CD4-positive, alpha-beta memory T cell (primary cell): ENCODE measurements at regions of chr20 and their contacts with region 1.

Region 1: DNA sequence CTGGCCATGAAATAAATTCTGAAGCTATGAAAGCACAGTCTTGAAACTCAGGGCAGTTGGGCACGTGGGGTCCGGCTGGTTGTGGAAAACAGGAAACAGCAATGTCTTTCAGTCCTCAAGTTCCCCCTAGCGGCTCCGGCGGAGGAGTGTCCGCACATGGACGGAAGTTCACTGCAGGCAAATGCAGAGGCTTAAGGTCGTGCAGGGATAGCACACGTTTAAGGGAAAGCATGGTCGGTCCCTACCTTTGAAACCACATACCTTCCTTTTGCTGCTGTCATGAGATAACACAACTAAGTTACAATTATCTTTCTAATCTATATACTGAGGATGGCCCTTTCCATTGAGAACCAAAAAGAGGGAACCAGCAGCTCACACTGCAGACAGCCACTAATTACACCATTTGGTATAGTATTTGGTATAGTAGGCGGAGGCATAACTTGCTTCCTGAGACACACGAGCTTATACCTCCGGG is 52.6 kb upstream of the NFATC2 start:
- DNase-seq: peak; percentile 62 to 72 (median 69)
- H3K4me3 ChIP-seq: no peak overlapping the region
- H3K4me3 Mint-ChIP-seq: peak overlapping the region in 7 of 8 donors; percentile 4 to 63 (median 36)
- H3K27ac ChIP-seq: no peak overlapping the region
- H3K27ac Mint-ChIP-seq: peak overlapping the region in 3 of 7 donors; percentile 27 to 68 (median 38)
- H3K4me1 ChIP-seq: peaks cover 10% of the 10 kb centered on the region
- H3K4me1 Mint-ChIP-seq: peaks cover 6 to 12% (median 8%) of the 10 kb centered on the region in 4 donors
- H3K27me3 ChIP-seq: no peaks in the 10 kb centered on the region
- H3K27me3 Mint-ChIP-seq: peaks cover 3 to 6% of the 10 kb centered on the region in 2 donors

Region 2: GRCh38 chr20:51220293-51220706 is 374.8 kb before region 1 on chr20:
- CTCF ChIA-PET with region 1: no interaction called
- POLR2A ChIA-PET with region 1: no interaction called
- intact Hi-C with region 1: loop called (anchors 10 kb)
- DNase-seq: peak in 4 of 5 donors; percentile 11 to 35 (median 29)
- H3K4me3 ChIP-seq: no peak overlapping the region
- H3K4me3 Mint-ChIP-seq: peak overlapping the region in 3 of 8 donors; percentile 21 to 39 (median 35)
- H3K27ac ChIP-seq: no peak overlapping the region
- H3K27ac Mint-ChIP-seq: no peak overlapping the region
- H3K4me1 ChIP-seq: no peaks in the 10 kb centered on the region
- H3K4me1 Mint-ChIP-seq: peaks cover 3 to 12% (median 6%) of the 10 kb centered on the region in 4 donors
- H3K27me3 ChIP-seq: peaks cover 3% of the 10 kb centered on the region
- H3K27me3 Mint-ChIP-seq: peaks cover 31 to 47% of the 10 kb centered on the region in 2 donors

Region 3: GRCh38 chr20:51372176-51372803 is 222.8 kb before region 1 on chr20:
- CTCF ChIA-PET with region 1: interaction called, 66 read pairs
- POLR2A ChIA-PET with region 1: interaction called, 3 read pairs
- intact Hi-C with region 1: loop called (anchors 1 kb)
- DNase-seq: peak in 4 of 5 donors; percentile 41 to 54 (median 46)
- H3K4me3 ChIP-seq: no peak overlapping the region
- H3K4me3 Mint-ChIP-seq: no peak overlapping the region
- H3K27ac ChIP-seq: no peak overlapping the region
- H3K27ac Mint-ChIP-seq: peak overlapping the region in 2 of 7 donors; percentile 63 to 81
- H3K4me1 ChIP-seq: no peaks in the 10 kb centered on the region
- H3K4me1 Mint-ChIP-seq: peaks cover 0 to 6% (median 4%) of the 10 kb centered on the region in 4 donors
- H3K27me3 ChIP-seq: no peaks in the 10 kb centered on the region
- H3K27me3 Mint-ChIP-seq: no peaks in the 10 kb centered on the region

Region 4: DNA sequence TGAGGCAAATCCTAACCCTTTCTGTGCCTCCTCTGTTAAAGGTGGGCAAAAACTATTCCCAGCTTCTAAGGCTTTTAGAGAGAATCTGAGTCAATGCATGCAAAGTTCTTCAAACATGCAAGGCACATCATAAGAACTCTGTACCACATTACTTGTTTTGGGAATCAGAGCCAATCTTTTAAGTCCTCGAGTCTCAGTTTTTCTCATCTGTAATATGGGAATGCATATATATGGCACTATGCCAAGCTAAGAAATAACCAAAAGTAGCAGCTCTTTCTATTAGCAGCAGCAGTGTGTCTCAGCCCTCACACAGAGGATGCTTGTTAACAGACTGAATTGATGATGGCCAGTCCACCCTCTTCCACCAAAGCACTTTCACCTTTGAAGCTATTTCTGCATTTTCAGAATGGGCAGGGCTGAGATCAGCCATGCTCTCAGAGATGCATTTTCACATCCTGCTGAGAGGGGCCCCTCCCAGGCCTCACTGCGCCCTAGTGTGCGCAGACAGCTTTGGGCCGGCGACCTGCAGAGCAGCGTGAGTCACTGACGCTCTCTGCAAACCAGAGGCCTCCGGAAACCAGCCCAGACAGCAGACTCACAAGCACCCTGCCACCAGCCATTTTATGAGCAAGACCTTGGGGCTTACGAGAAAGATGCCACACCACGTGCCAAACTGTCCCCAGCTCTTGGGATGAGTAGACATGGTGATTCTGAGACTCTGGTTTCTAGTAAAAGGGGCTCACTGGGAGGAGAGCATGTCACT is 190.6 kb before region 1 on chr20:
- CTCF ChIA-PET with region 1: interaction called, 11 read pairs
- POLR2A ChIA-PET with region 1: interaction called, 4 read pairs
- intact Hi-C with region 1: no loop called
- DNase-seq: peak; percentile 86 to 98 (median 90)
- H3K4me3 ChIP-seq: no peak overlapping the region
- H3K4me3 Mint-ChIP-seq: peak overlapping the region in 7 of 8 donors; percentile 43 to 94 (median 78)
- H3K27ac ChIP-seq: peak overlapping the region; percentile 96
- H3K27ac Mint-ChIP-seq: peak overlapping the region; percentile 99 to 100 (median 100)
- H3K4me1 ChIP-seq: peaks cover 97% of the 10 kb centered on the region
- H3K4me1 Mint-ChIP-seq: peaks cover 64 to 92% (median 77%) of the 10 kb centered on the region in 4 donors
- H3K27me3 ChIP-seq: no peaks in the 10 kb centered on the region
- H3K27me3 Mint-ChIP-seq: no peaks in the 10 kb centered on the region

Region 5: GRCh38 chr20:51500311-51500710 is 94.8 kb before region 1 on chr20:
- CTCF ChIA-PET with region 1: interaction called, 8 read pairs
- POLR2A ChIA-PET with region 1: no interaction called
- intact Hi-C with region 1: loop called (anchors 5 kb)
- DNase-seq: peak; percentile 55 to 85 (median 64)
- H3K4me3 ChIP-seq: no peak overlapping the region
- H3K4me3 Mint-ChIP-seq: peak overlapping the region in 5 of 8 donors; percentile 14 to 88 (median 62)
- H3K27ac ChIP-seq: peak overlapping the region; percentile 16
- H3K27ac Mint-ChIP-seq: peak overlapping the region; percentile 90 to 99 (median 97)
- H3K4me1 ChIP-seq: peaks cover 80% of the 10 kb centered on the region
- H3K4me1 Mint-ChIP-seq: peaks cover 70 to 88% (median 79%) of the 10 kb centered on the region in 4 donors
- H3K27me3 ChIP-seq: no peaks in the 10 kb centered on the region
- H3K27me3 Mint-ChIP-seq: no peaks in the 10 kb centered on the region

Region 6: DNA sequence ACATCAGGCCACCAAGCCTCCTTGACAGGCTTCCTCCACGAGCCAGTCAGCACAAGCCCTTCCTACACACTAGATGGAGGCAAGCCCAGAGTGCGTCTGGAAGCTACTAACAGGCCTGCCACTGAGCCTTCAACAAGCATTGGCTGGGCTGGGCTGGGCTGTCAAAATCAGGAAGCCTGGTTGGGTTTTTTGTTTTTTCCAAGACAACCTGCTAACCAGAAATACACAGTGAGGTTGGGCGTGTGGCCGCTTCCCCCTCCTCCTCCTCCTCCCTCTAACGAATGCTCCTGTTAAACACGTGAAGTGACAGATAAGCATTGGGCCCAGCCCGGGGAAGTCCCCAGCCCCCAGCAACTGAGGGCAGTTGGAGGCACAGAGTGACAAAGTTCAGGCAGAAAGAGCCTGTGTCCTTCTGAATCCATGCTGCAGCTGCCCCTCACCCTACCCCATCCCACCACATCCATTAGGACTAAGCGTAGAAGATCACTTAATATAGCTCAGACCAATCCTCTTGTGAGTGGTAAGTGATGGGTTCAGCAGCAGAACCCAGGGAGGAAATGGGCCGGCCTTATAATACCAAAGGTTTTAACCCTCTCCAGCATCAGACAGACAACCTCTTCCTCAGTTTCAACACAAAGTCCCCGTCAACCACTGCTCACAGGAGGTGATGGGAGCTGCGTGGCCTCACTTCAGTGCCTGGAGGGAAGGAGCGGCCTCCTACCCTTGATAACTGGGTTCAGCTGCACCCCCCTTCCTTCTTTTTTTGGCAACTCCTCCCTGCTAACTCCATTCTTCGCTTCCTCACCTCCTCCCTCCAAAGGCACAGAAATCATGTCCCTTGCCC is 53.7 kb before region 1 on chr20:
- CTCF ChIA-PET with region 1: interaction called, 21 read pairs
- POLR2A ChIA-PET with region 1: interaction called, 13 read pairs
- intact Hi-C with region 1: loop called (anchors 2 kb)
- DNase-seq: peak; percentile 88 to 98 (median 91)
- H3K4me3 ChIP-seq: peak overlapping the region; percentile 72 to 85
- H3K4me3 Mint-ChIP-seq: peak overlapping the region; percentile 95 to 99 (median 98)
- H3K27ac ChIP-seq: peak overlapping the region; percentile 98
- H3K27ac Mint-ChIP-seq: peak overlapping the region; percentile 97 to 100 (median 98)
- H3K4me1 ChIP-seq: peaks cover 55% of the 10 kb centered on the region
- H3K4me1 Mint-ChIP-seq: peaks cover 43 to 65% (median 52%) of the 10 kb centered on the region in 4 donors
- H3K27me3 ChIP-seq: no peaks in the 10 kb centered on the region
- H3K27me3 Mint-ChIP-seq: no peaks in the 10 kb centered on the region

Region 7: GRCh38 chr20:51624157-51624731 is 29.1 kb after region 1 on chr20:
- CTCF ChIA-PET with region 1: interaction called, 9 read pairs
- POLR2A ChIA-PET with region 1: no interaction called
- intact Hi-C with region 1: loop called (anchors 2 kb)
- DNase-seq: peak; percentile 47 to 56 (median 54)
- H3K4me3 ChIP-seq: no peak overlapping the region
- H3K4me3 Mint-ChIP-seq: no peak overlapping the region
- H3K27ac ChIP-seq: no peak overlapping the region
- H3K27ac Mint-ChIP-seq: no peak overlapping the region
- H3K4me1 ChIP-seq: no peaks in the 10 kb centered on the region
- H3K4me1 Mint-ChIP-seq: peaks cover 2 to 11% (median 5%) of the 10 kb centered on the region in 4 donors
- H3K27me3 ChIP-seq: no peaks in the 10 kb centered on the region
- H3K27me3 Mint-ChIP-seq: peaks cover 2 to 3% of the 10 kb centered on the region in 2 donors